Calu3 (cell line): ENCODE measurements at regions of chr6 and their contacts with region 1.

Region 1: GRCh38 chr6:56902641-56903464 is 52.1 kb upstream of the BEND6 start:
- DNase-seq: no peak
- H3K4me3 Mint-ChIP-seq: no peak overlapping the region
- H3K27ac Mint-ChIP-seq: no peak overlapping the region
- H3K4me1 Mint-ChIP-seq: peaks cover 27% of the 10 kb centered on the region
- H3K27me3 Mint-ChIP-seq: no peaks in the 10 kb centered on the region
- CTCF ChIP-seq: peak; percentile 51

Region 2: GRCh38 chr6:56833127-56833791 is 69.6 kb before region 1 on chr6:
- CTCF ChIA-PET with region 1: no interaction called
- intact Hi-C with region 1: no loop called
- DNase-seq: no peak
- H3K4me3 Mint-ChIP-seq: no peak overlapping the region
- H3K27ac Mint-ChIP-seq: no peak overlapping the region
- H3K4me1 Mint-ChIP-seq: peaks cover 35% of the 10 kb centered on the region
- H3K27me3 Mint-ChIP-seq: no peaks in the 10 kb centered on the region
- CTCF ChIP-seq: no peak

Region 3: GRCh38 chr6:56955171-56956045 is 52.6 kb after region 1 on chr6:
- CTCF ChIA-PET with region 1: interaction called, 21 read pairs
- intact Hi-C with region 1: loop called (anchors 5 kb)
- DNase-seq: peak; percentile 97
- H3K4me3 Mint-ChIP-seq: peak overlapping the region; percentile 90
- H3K27ac Mint-ChIP-seq: peak overlapping the region; percentile 66
- H3K4me1 Mint-ChIP-seq: no peaks in the 10 kb centered on the region
- H3K27me3 Mint-ChIP-seq: no peaks in the 10 kb centered on the region
- CTCF ChIP-seq: peak; percentile 92

Region 4: GRCh38 chr6:57108691-57109090 is 205.8 kb after region 1 on chr6:
- CTCF ChIA-PET with region 1: no interaction called
- intact Hi-C with region 1: no loop called
- DNase-seq: no peak
- H3K4me3 Mint-ChIP-seq: no peak overlapping the region
- H3K27ac Mint-ChIP-seq: no peak overlapping the region
- H3K4me1 Mint-ChIP-seq: no peaks in the 10 kb centered on the region
- H3K27me3 Mint-ChIP-seq: no peaks in the 10 kb centered on the region
- CTCF ChIP-seq: no peak

Region 5: GRCh38 chr6:57283106-57283505 is 380.3 kb after region 1 on chr6:
- CTCF ChIA-PET with region 1: no interaction called
- intact Hi-C with region 1: no loop called
- DNase-seq: no peak
- H3K4me3 Mint-ChIP-seq: no peak overlapping the region
- H3K27ac Mint-ChIP-seq: no peak overlapping the region
- H3K4me1 Mint-ChIP-seq: no peaks in the 10 kb centered on the region
- H3K27me3 Mint-ChIP-seq: no peaks in the 10 kb centered on the region
- CTCF ChIP-seq: no peak